Heart right ventricle (tissue), 16 donors: ENCODE measurements at regions of chr4 and their contacts with region 1.

Region 1: GRCh38 chr4:4269856-4270255 is 20.1 kb downstream of the LYAR start:
- DNase-seq: no peak
- ATAC-seq: peak in 5 of 8 donors; percentile 29 to 70 (median 39)
- H3K4me3 ChIP-seq: no peak overlapping the region
- H3K27ac ChIP-seq: peak overlapping the region in 1 of 10 donors; percentile 86
- H3K4me1 ChIP-seq: peaks cover 0 to 53% (median 0%) of the 10 kb centered on the region in 9 donors
- H3K27me3 ChIP-seq: no peaks in the 10 kb centered on the region
- CTCF ChIP-seq: no peak

Region 2: DNA sequence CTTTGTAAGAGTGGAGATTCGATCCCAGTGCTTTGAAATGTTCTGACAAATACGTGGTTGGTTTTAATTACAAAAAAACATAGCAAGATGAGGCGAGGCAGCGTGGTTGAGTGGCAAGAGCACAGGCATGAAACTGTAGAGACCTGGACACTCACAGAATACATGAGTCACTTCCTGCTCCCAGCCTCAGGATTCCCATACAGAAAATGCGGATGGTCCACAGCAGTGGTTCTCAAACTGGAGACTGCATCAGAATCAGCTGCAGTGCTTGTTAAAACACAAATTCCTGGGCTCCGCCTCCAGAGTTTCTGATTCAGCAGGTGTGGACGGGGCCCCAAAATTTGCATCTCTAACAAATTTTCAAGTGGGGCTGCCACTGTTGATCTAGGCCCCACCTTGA is 53.2 kb before region 1 on chr4:
- intact Hi-C with region 1: no loop called
- DNase-seq: no peak
- ATAC-seq: no peak
- H3K4me3 ChIP-seq: no peak overlapping the region
- H3K27ac ChIP-seq: no peak overlapping the region
- H3K4me1 ChIP-seq: no peaks in the 10 kb centered on the region
- H3K27me3 ChIP-seq: peaks cover 0 to 41% (median 19%) of the 10 kb centered on the region in 7 donors
- CTCF ChIP-seq: no peak

Region 3: DNA sequence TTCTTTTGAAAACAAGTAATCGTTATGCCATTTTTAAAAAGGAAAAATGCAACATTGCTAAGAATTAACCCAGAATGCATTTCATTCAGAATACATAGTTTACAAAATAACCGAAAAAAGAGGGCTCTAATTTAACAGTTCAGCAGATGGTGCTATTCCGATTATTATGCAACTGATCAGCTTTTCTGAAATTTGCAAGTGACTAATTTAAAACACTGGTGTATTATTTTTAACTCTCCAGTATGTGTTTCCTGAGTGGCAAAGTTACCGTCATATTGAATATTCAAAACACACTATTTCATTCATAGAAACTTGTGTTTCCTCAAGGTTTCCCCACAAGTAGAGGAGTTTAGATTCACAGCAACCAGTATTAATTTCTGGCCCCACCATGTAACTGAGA is 41.3 kb after region 1 on chr4:
- intact Hi-C with region 1: loop called in 1 of 10 experiments (anchors 5 kb)
- DNase-seq: no peak
- ATAC-seq: no peak
- H3K4me3 ChIP-seq: no peak overlapping the region
- H3K27ac ChIP-seq: no peak overlapping the region
- H3K4me1 ChIP-seq: no peaks in the 10 kb centered on the region
- H3K27me3 ChIP-seq: no peaks in the 10 kb centered on the region
- CTCF ChIP-seq: no peak

Region 4: GRCh38 chr4:4430492-4431197 is 160.8 kb after region 1 on chr4:
- intact Hi-C with region 1: no loop called
- DNase-seq: no peak
- ATAC-seq: peak in 4 of 8 donors; percentile 48 to 61 (median 50)
- H3K4me3 ChIP-seq: no peak overlapping the region
- H3K27ac ChIP-seq: no peak overlapping the region
- H3K4me1 ChIP-seq: peaks cover 0 to 7% (median 0%) of the 10 kb centered on the region in 9 donors
- H3K27me3 ChIP-seq: no peaks in the 10 kb centered on the region
- CTCF ChIP-seq: peak in 7 of 9 donors; percentile 49 to 63 (median 55)